Activated CD4-positive, alpha-beta T cell treated with anti-CD3 and anti-CD28 coated beads for 36 hours (primary cell): ENCODE measurements at regions of chr2 and their contacts with region 1.

Region 1: GRCh38 chr2:171095014-171095582 is 65.6 kb downstream of the TLK1 start:
- DNase-seq: no peak
- ATAC-seq: peak; percentile 70
- H3K4me3 Mint-ChIP-seq: peak overlapping the region; percentile 15
- H3K27ac Mint-ChIP-seq: peak overlapping the region; percentile 65
- H3K4me1 Mint-ChIP-seq: peaks cover 37% of the 10 kb centered on the region
- H3K27me3 Mint-ChIP-seq: no peaks in the 10 kb centered on the region

Region 2: DNA sequence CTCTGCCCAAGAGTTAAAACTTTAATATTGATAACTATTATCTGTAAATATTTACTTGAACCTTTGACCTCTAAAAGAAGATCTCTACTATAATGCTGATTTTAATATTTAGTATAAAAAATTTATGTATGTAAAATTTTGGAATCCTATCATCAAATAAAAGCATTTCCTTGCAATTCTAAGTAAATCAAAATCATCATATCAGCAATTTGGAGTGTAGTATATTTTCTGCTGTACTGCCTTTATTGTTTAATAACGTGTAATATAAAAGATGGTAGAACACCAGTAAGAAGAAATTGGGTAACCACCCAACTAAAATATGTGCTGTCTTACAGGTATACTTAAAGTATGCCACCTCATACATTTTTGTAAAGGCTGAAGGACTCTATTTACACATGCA is 29.0 kb before region 1 on chr2:
- CTCF ChIA-PET with region 1: no interaction called
- POLR2A ChIA-PET with region 1: no interaction called
- intact Hi-C with region 1: no loop called
- DNase-seq: no peak
- ATAC-seq: no peak
- H3K4me3 Mint-ChIP-seq: no peak overlapping the region
- H3K27ac Mint-ChIP-seq: no peak overlapping the region
- H3K4me1 Mint-ChIP-seq: peaks cover 22% of the 10 kb centered on the region
- H3K27me3 Mint-ChIP-seq: no peaks in the 10 kb centered on the region

Region 3: GRCh38 chr2:171136024-171136423 is 40.9 kb after region 1 on chr2:
- CTCF ChIA-PET with region 1: interaction called, 3 read pairs
- POLR2A ChIA-PET with region 1: interaction called, 3 read pairs
- intact Hi-C with region 1: loop called (anchors 1 to 5 kb)
- DNase-seq: peak; percentile 41
- ATAC-seq: peak; percentile 93
- H3K4me3 Mint-ChIP-seq: peak overlapping the region; percentile 20
- H3K27ac Mint-ChIP-seq: peak overlapping the region; percentile 86
- H3K4me1 Mint-ChIP-seq: peaks cover 73% of the 10 kb centered on the region
- H3K27me3 Mint-ChIP-seq: no peaks in the 10 kb centered on the region